Activated naive CD4-positive, alpha-beta T cell treated with anti-CD3 and anti-CD28 coated beads for 36 hours (primary cell): ENCODE measurements at regions of chr18 and their contacts with region 1.

Region 1: GRCh38 chr18:49021433-49022129 is 70.8 kb upstream of the SMAD7 start:
- DNase-seq: peak; percentile 78
- H3K4me3 Mint-ChIP-seq: no peak overlapping the region
- H3K27ac Mint-ChIP-seq: no peak overlapping the region
- H3K4me1 Mint-ChIP-seq: no peaks in the 10 kb centered on the region
- H3K27me3 Mint-ChIP-seq: no peaks in the 10 kb centered on the region

Region 2: GRCh38 chr18:49238433-49239042 is 217.0 kb after region 1 on chr18:
- CTCF ChIA-PET with region 1: interaction called, 5 read pairs
- intact Hi-C with region 1: loop called (anchors 2 kb)
- DNase-seq: no peak
- H3K4me3 Mint-ChIP-seq: no peak overlapping the region
- H3K27ac Mint-ChIP-seq: no peak overlapping the region
- H3K4me1 Mint-ChIP-seq: no peaks in the 10 kb centered on the region
- H3K27me3 Mint-ChIP-seq: no peaks in the 10 kb centered on the region